Caco-2 (cell line): ENCODE measurements at regions of chr17 and their contacts with region 1.

Region 1: DNA sequence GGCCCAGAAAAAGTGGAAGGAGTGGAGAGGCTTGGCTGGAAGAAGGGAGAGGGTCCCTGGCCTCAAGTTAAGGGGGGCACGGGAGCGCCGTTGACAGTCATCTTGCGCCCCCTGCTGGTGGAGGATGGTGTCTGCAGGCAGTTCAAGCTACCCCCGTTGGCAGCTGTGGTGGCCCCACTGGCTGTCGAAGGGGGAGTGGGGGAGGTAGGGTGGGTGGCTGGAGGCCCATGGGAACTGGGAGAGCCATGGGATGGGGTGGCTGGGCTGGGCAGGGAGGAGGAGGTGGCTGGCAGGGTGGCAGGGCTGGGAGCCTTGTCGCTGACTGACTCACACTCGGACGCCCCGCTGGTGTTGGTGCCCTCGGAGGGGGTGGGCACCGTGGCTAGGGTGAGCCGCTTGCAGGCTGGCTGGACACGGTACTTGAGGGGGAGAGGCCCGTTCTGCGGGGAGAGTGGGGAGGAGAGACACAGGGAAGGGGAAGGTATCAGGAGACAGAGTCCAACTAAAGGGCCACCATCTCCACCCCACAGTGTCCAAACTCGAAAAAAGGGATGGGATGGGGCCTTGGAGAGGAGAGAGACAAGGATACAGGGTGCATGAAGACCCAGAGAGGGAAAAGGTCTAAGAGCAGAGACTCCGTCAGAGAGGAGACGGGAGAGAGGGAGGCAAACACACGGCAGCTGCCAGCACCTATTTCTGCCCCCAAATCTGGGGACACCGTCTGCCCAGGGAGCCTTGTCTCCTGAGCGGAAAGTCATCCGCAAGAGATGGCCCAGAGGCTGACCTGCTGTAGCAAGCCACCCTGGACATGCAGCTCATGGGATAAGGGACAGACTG is 5.2 kb downstream of the CISD3 start:
- DNase-seq: peak in 1 of 2 experiments; percentile 77
- H3K4me3 ChIP-seq: no peak overlapping the region
- H3K4me3 Mint-ChIP-seq: no peak overlapping the region
- H3K27ac Mint-ChIP-seq: peak overlapping the region; percentile 34
- H3K4me1 ChIP-seq: peaks cover 15% of the 10 kb centered on the region
- H3K4me1 Mint-ChIP-seq: peaks cover 6% of the 10 kb centered on the region
- H3K27me3 ChIP-seq: no peaks in the 10 kb centered on the region
- H3K27me3 Mint-ChIP-seq: no peaks in the 10 kb centered on the region
- CTCF ChIP-seq: peak; percentile 93 to 97

Region 2: DNA sequence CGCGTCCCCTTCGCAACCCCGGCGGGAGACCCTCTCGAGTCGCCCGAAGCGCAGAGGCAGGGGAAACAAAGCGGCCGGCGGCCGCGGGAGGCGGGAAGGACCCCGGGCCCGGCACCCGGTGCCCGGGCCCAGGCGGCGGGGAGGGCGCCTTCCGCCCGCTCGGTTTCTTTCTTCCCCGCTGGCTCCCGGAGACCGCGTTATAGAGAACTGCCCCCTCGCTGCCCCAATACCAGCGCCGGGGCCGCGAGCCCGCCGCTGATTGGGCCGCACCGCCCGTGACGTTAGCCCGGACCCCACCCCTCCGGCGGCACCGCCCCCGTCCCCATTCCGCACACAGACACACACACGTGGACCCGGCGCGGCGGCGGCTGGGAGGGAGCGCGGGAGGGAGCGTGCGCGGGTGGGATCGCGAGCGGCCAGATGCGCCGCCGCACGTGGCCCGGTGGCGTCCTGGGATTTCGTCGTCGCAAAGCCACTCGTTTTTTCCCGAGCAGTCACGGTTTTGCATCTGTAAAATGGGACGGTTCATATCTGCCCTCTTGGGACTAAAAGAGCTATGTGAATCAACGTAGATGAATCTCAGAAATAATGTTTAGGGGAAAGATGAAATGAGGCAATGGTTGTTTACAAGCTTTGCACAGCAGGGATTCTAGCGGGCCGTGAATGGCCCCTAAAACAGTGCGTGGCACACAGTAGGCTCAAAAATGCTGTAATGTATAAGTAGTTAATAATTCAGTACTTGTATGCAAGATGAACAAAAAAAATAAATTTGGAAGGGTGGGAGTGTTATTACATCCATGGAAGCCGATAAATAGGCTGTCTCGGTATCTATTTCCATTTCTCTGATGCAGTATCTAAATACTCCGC is 60.4 kb before region 1 on chr17 and contains the start of gene EPOP:
- CTCF ChIA-PET with region 1: interaction called, 19 read pairs
- POLR2A ChIA-PET with region 1: no interaction called
- intact Hi-C with region 1: loop called (anchors 1 kb)
- DNase-seq: peak; percentile 93 to 96
- H3K4me3 ChIP-seq: peak within 1 kb of the TSS; percentile 90
- H3K4me3 Mint-ChIP-seq: peak within 1 kb of the TSS; percentile 71
- H3K27ac Mint-ChIP-seq: peak within 1 kb of the TSS; percentile 98
- H3K4me1 ChIP-seq: peaks cover 41% of the 10 kb centered on the region
- H3K4me1 Mint-ChIP-seq: peaks cover 25% of the 10 kb centered on the region
- H3K27me3 ChIP-seq: no peaks in the 10 kb centered on the region
- H3K27me3 Mint-ChIP-seq: no peaks in the 10 kb centered on the region
- CTCF ChIP-seq: no peak
- total RNA-seq, gene EPOP: 17.1 and 19.1 TPM in 2 replicates

Region 3: DNA sequence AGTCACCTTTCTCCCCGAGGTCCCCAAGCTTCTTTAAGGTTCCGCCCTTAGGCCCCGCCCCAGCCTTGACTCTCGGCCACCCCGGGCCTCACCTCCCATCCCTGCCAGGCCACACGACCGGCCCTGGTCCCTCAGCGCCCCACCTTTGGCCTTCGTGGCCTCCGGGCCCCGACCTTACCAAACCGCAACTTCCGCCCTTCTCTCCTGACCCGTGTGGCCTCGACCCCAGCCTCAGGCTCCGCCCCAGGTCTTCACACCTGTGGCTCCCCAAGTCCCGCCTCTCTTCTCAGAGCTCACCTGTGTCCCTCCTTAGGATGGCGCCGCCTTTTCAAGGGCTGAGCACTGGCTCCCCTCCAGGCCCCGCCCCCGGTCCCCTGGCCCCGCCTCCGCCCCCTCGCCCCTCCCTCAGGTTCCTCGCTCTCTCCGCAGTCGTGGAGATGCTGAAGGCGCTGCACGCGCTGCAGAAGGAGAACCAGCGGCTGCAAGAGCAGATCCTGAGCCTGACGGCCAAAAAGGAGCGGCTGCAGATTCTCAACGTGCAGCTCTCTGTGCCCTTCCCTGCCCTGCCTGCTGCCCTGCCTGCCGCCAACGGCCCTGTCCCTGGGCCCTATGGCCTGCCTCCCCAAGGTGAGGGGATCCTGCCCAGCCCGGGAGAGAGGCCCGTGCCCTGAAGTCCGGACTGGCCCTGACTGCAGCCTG is 15.3 kb before region 1 on chr17:
- CTCF ChIA-PET with region 1: interaction called, 10 read pairs
- POLR2A ChIA-PET with region 1: no interaction called
- intact Hi-C with region 1: no loop called
- DNase-seq: peak in 1 of 2 experiments; percentile 65
- H3K4me3 ChIP-seq: no peak overlapping the region
- H3K4me3 Mint-ChIP-seq: peak overlapping the region; percentile 64
- H3K27ac Mint-ChIP-seq: peak overlapping the region; percentile 60
- H3K4me1 ChIP-seq: peaks cover 7% of the 10 kb centered on the region; the same call in 1 of the 2 replicates
- H3K4me1 Mint-ChIP-seq: peaks cover 14% of the 10 kb centered on the region
- H3K27me3 ChIP-seq: no peaks in the 10 kb centered on the region
- H3K27me3 Mint-ChIP-seq: no peaks in the 10 kb centered on the region
- CTCF ChIP-seq: no peak

Region 4: DNA sequence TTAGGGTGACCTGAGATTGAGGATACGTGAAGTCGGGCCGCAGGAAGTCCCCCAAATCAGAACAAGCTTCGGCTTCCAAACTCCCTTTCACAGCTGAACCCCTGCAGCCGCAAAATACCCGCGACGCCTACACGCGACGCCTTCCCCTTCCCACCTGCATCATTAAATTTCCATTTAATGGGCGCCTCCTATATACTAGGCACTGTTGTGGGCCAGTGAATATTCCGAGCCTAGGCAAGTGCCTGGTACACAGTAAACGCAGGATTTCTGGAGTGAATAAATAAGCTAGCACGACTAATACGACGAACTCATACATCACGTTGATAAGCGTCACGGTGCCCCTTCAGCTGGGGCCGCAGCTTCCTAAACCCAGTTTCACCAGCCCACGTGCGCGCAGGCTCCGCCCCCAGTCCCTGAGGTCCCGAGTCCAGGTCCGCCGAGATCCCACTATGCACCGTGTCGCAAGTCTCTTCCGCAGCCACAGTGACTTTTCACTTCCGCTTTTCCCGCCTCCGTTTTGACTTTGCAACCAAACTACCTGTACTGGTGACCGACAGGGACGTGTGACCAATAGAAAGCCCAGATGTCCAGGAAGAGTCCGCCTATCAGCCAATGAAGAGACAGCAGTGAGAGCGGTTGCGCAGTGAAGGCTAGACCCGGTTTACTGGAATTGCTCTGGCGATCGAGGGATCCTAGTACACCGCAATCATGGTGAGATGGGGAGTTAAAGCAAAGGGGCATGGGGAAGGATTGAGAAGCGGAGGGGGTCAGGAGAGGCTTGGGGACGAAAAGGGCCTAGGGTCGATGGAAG is 16.9 kb after region 1 on chr17 and contains the start of gene PSMB3:
- CTCF ChIA-PET with region 1: interaction called, 11 read pairs
- POLR2A ChIA-PET with region 1: no interaction called
- intact Hi-C with region 1: loop called (anchors 2 kb)
- DNase-seq: peak; percentile 98 to 100
- H3K4me3 ChIP-seq: peak within 1 kb of the TSS; percentile 90
- H3K4me3 Mint-ChIP-seq: peak within 1 kb of the TSS; percentile 79
- H3K27ac Mint-ChIP-seq: peak within 1 kb of the TSS; percentile 80
- H3K4me1 ChIP-seq: peaks cover 13% of the 10 kb centered on the region
- H3K4me1 Mint-ChIP-seq: peaks cover 18% of the 10 kb centered on the region
- H3K27me3 ChIP-seq: no peaks in the 10 kb centered on the region
- H3K27me3 Mint-ChIP-seq: peaks cover 2% of the 10 kb centered on the region
- CTCF ChIP-seq: no peak
- total RNA-seq, gene PSMB3: 427 and 465 TPM in 2 replicates

Region 5: GRCh38 chr17:38779965-38780752 is 44.8 kb after region 1 on chr17:
- CTCF ChIA-PET with region 1: interaction called, 10 read pairs
- POLR2A ChIA-PET with region 1: no interaction called
- intact Hi-C with region 1: no loop called
- DNase-seq: no peak
- H3K4me3 ChIP-seq: no peak overlapping the region
- H3K4me3 Mint-ChIP-seq: no peak overlapping the region
- H3K27ac Mint-ChIP-seq: no peak overlapping the region
- H3K4me1 ChIP-seq: no peaks in the 10 kb centered on the region
- H3K4me1 Mint-ChIP-seq: no peaks in the 10 kb centered on the region
- H3K27me3 ChIP-seq: no peaks in the 10 kb centered on the region
- H3K27me3 Mint-ChIP-seq: no peaks in the 10 kb centered on the region
- CTCF ChIP-seq: no peak

Region 6: DNA sequence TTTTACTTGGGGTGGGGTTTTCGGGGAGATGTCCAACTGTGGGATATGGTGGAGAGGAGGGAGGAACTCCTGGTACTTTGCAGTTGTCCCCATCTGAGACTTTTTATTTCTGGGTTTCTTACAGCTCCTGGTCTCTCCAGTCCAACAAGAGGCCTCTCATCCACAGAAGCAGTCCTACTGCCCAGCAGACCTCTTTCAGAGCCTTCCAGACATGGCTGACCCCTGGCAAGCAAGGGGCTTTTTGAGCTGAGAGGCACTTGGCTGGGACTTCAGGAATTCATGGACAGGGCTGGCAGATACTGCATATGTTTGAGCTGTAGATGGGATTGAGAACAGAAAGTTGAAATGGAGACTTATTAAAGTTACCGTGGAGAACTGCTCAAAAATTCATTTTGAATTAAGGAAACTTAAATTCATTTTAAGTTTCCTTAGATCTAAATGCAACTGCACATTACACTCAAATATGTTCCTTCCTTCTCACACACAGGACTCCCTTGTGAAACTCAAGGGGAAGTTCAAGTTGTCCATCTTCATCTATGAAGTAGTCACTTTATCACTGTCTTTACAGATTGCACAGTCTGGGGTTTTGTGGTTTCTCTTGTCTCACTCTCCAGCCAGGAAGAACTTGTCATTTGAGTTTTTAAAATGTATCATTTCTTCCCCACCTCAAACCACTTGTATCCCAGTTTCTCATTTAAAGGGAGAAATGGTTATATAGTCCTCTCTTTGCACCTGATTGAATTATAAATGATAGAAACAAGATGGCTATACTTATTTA is 191.1 kb after region 1 on chr17:
- CTCF ChIA-PET with region 1: no interaction called
- POLR2A ChIA-PET with region 1: no interaction called
- intact Hi-C with region 1: no loop called
- DNase-seq: no peak
- H3K4me3 ChIP-seq: no peak overlapping the region
- H3K4me3 Mint-ChIP-seq: no peak overlapping the region
- H3K27ac Mint-ChIP-seq: no peak overlapping the region
- H3K4me1 ChIP-seq: no peaks in the 10 kb centered on the region
- H3K4me1 Mint-ChIP-seq: no peaks in the 10 kb centered on the region
- H3K27me3 ChIP-seq: no peaks in the 10 kb centered on the region
- H3K27me3 Mint-ChIP-seq: no peaks in the 10 kb centered on the region
- CTCF ChIP-seq: no peak